HepG2 (cell line): ENCODE measurements at regions of chr10 and their contacts with region 1.

Region 1: GRCh38 chr10:80161331-80162083 is 29.0 kb downstream of the PLAC9 start:
- DNase-seq: peak; percentile 55
- ATAC-seq: peak; percentile 45; the same call in 2 of the 3 replicates
- H3K4me3 ChIP-seq: no peak overlapping the region
- H3K27ac ChIP-seq: no peak overlapping the region
- H3K4me1 ChIP-seq: no peaks in the 10 kb centered on the region
- H3K27me3 ChIP-seq: no peaks in the 10 kb centered on the region
- CTCF ChIP-seq: 0 out of 2 replicates have a peak, but pooled peaks have one; percentile 22
- EP300 ChIP-seq: no peak
- POLR2A ChIP-seq: no peak
- RAD21 ChIP-seq: peak; percentile 40; the same call in 1 of the 2 replicates

Region 2: GRCh38 chr10:80205478-80206276 is 44.2 kb after region 1 on chr10 and contains the start of gene ANXA11:
- CTCF ChIA-PET with region 1: no interaction called
- POLR2A ChIA-PET with region 1: no interaction called
- in situ Hi-C with region 1: no loop called
- intact Hi-C with region 1: loop called (anchors 1 kb)
- DNase-seq: peak; percentile 72
- ATAC-seq: peak; percentile 81
- H3K4me3 ChIP-seq: peak within 1 kb of the TSS; percentile 87 to 93 (median 88)
- H3K27ac ChIP-seq: peak within 1 kb of the TSS; percentile 74
- H3K4me1 ChIP-seq: peaks cover 46% of the 10 kb centered on the region
- H3K27me3 ChIP-seq: no peaks in the 10 kb centered on the region; a peak in 1 of 5 replicates
- CTCF ChIP-seq: peak; percentile 21; the same call in 1 of the 2 replicates
- EP300 ChIP-seq: no peak
- POLR2A ChIP-seq: peak; percentile 91 to 92
- RAD21 ChIP-seq: peak; percentile 34; the same call in 1 of the 2 replicates
- total RNA-seq, gene ANXA11: 51.5 and 63.3 TPM in 2 replicates